Right cardiac atrium (tissue), 5 donors: ENCODE measurements at regions of chr3 and their contacts with region 1.

Region 1: GRCh38 chr3:108221911-108222852 is at the start of gene IFT57:
- DNase-seq: peak; percentile 97 to 98 (median 98)
- ATAC-seq: peak; percentile 100
- H3K4me3 ChIP-seq: peak within 1 kb of the TSS; percentile 47
- H3K27ac ChIP-seq: peak within 1 kb of the TSS; percentile 6
- H3K4me1 ChIP-seq: no peaks in the 10 kb centered on the region
- H3K27me3 ChIP-seq: no peaks in the 10 kb centered on the region
- total RNA-seq, gene IFT57: 23.5 to 33.8 (median 29.8) TPM

Region 2: DNA sequence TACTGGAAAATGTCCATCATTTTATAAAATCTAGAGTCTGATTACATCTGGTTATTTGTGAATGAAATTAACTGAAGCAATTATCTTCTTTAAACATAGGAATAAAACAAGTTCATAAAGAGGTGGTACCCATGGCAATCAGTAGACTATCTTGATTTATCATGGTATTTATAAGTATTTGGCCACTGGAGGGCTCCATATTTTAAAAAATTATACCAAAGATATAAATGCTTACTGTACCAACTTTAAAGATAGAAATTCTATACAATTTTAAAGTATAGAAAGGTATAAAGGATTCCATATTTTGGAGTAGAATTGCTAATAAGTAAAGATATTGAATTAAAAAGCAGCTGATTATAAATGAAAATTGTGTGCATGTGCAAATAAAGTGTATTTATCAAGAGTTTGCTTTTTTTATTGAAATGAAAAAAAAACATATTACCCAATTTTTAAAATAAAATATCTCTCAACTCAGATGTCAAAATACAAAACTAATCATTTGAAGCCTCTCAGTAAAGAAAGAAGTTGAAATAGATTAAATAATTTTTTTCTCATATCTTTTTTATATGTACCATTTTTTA is 594.1 kb before region 1 on chr3:
- intact Hi-C with region 1: no loop called
- DNase-seq: no peak
- ATAC-seq: no peak
- H3K4me3 ChIP-seq: no peak overlapping the region
- H3K27ac ChIP-seq: no peak overlapping the region
- H3K4me1 ChIP-seq: peaks cover 2% of the 10 kb centered on the region
- H3K27me3 ChIP-seq: no peaks in the 10 kb centered on the region

Region 3: DNA sequence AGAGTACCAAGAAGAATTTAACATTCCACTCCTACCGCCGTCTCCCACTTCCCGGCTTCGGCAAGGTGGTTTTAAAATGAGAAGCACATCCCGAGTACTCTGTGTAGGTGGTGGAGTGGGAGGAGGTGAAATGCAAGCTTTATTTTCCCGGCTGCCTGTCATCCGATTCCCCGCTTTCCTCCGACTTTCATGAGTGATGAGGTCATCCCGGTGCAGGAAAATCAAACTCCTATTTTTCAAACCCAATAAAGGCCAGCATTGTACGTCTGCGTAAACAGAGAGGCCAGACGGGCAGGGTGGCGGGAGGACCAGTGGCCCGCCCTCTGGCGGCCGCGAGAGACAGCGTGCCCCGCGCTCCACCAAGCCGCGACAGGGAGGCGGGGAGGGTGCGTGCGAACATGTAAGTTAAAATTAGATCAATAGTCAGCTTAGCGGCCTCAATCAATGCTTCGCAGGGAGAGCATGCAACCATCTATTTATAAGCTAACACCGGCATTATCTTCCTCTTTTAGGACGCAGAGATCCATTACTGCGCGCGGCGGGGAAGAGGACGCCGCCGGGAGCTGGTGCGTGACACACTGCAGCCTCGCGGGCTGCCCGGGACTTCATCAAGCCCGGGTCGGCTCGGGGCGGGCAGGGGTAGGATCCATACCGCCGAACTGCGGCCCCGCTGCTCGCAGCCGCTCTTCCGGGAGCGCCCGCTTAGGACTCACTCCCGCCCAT is 294.7 kb before region 1 on chr3:
- intact Hi-C with region 1: loop called in 1 of 4 experiments (anchors 10 kb)
- DNase-seq: peak; percentile 70 to 90 (median 88)
- ATAC-seq: peak; percentile 98
- H3K4me3 ChIP-seq: peak overlapping the region; percentile 63
- H3K27ac ChIP-seq: no peak overlapping the region
- H3K4me1 ChIP-seq: no peaks in the 10 kb centered on the region
- H3K27me3 ChIP-seq: no peaks in the 10 kb centered on the region

Region 4: DNA sequence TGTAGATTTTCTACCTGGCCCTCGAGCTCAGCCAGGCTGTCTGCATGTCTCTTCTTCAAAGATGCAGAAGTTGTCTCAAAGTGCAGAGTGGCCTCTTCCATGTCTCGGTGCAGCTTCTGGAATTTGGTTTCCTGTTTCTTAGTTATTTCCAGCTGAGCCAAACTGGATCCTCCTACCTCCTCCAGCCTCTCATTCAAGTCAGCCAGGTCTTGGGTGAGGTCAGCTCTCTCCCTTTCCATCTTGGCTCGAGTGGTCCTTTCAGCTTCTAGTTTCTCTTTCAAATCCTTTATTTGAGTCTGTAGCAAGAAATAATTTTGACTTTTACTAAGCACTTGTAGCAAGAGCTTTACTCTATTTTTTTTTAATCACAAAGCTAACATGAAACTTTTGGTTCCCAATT is 206.4 kb after region 1 on chr3:
- intact Hi-C with region 1: no loop called
- DNase-seq: no peak
- ATAC-seq: no peak
- H3K4me3 ChIP-seq: no peak overlapping the region
- H3K27ac ChIP-seq: no peak overlapping the region
- H3K4me1 ChIP-seq: no peaks in the 10 kb centered on the region
- H3K27me3 ChIP-seq: no peaks in the 10 kb centered on the region

Region 5: DNA sequence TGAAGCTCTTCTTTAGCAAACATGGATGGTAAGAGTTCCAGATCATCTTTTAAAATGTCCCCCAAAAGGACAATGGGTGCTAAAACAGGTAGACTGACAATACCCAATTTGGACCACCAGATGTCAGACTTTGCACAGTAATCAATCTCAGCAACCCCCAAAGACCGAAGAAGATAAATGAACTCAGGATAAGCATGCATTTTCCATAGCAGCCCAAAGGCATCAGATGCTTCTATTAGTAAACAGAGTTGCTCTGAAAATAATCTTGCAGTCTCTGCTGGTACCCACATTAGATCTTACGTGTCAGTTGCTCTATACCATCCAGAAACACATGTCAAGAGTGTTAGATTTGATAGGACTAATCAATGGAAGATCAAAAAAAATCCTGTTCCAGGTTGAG is 267.6 kb after region 1 on chr3:
- intact Hi-C with region 1: no loop called
- DNase-seq: no peak
- ATAC-seq: peak; percentile 47 to 66
- H3K4me3 ChIP-seq: no peak overlapping the region
- H3K27ac ChIP-seq: no peak overlapping the region
- H3K4me1 ChIP-seq: no peaks in the 10 kb centered on the region
- H3K27me3 ChIP-seq: no peaks in the 10 kb centered on the region